HEK293 (cell line): ENCODE measurements at regions of chr20 and their contacts with region 1.

Region 1: GRCh38 chr20:48295445-48295963 is 510.2 kb upstream of the SULF2 start:
- H3K4me3 ChIP-seq: no peak overlapping the region
- H3K27ac ChIP-seq: no peak overlapping the region
- H3K4me1 ChIP-seq: peaks cover 10% of the 10 kb centered on the region
- CTCF ChIP-seq: 0 out of 2 replicates have a peak, but pooled peaks have one; percentile 12

Region 2: DNA sequence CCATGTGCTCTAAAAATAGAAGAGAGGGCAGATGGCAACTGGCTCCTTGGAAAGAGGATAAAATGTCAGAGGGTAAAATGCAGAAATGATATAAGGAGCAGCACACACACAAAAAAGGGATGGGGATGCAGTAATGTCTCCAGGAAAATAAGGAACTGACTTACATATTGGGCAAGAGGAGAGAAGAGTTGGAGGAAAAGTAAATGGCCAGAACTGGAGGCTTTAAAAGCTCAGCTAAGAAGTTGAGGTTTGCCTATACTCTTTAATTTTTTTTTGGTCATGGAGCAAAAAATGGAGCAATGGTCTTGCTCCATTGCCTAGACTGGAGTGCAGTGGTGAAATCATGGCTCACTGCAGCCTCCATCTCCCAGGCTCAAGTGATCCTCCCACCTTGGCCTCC is 603.9 kb before region 1 on chr20:
- CTCF ChIA-PET with region 1: no interaction called
- POLR2A ChIA-PET with region 1: no interaction called
- H3K4me3 ChIP-seq: no peak overlapping the region
- H3K27ac ChIP-seq: no peak overlapping the region
- H3K4me1 ChIP-seq: no peaks in the 10 kb centered on the region
- CTCF ChIP-seq: no peak

Region 3: DNA sequence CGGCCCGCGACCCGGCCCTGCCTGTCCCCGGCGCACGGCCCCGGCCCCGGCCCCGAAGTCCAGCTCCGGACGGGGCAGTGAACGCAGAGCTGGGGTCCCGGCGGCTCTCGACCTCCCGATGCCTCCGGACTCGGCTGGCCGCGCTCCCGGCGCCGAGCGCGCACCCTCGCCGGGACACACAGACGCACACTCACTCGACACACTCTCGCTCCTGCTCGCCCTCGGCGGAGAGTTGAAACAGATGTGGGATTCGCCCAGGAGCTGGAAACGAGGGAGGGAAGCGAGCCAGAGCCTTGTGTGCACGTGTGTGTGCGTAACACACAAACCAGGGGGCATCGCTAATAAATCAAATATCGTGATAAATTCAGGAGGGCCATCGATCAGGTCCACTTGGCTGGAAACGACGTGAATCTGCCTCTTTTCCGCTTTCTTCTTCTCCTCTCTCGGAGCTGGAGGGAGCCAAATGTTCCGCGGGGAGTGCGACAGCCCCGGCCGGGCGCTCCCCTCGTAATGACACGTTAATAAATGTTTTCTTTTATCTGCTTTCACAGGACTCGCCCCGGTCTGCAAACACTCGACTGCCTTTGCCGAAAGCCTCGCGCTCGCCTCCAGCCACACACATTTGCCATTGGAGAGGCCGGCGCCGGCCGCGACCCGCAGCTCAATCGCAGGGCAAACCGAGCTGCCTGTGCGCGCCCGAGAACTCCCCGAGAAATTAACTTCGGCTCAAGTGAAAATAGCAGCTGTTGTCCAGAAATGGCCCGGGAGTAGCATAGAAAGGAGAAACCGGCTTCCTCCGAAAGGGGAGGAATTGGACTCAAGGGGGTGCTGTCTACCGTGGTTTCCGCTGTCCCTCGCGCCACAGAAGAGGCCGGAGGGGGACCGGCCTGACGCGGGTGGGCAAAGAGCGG is 509.4 kb before region 1 on chr20:
- CTCF ChIA-PET with region 1: interaction called, 23 read pairs
- POLR2A ChIA-PET with region 1: no interaction called
- H3K4me3 ChIP-seq: peak overlapping the region; percentile 29
- H3K27ac ChIP-seq: peak overlapping the region; percentile 80
- H3K4me1 ChIP-seq: peaks cover 18% of the 10 kb centered on the region
- CTCF ChIP-seq: peak; percentile 87

Region 4: GRCh38 chr20:47854163-47854562 is 441.3 kb before region 1 on chr20:
- CTCF ChIA-PET with region 1: interaction called, 10 read pairs
- POLR2A ChIA-PET with region 1: no interaction called
- H3K4me3 ChIP-seq: no peak overlapping the region
- H3K27ac ChIP-seq: no peak overlapping the region
- H3K4me1 ChIP-seq: no peaks in the 10 kb centered on the region; the same call in 1 of the 2 replicates
- CTCF ChIP-seq: no peak

Region 5: GRCh38 chr20:48308232-48308781 is 12.8 kb after region 1 on chr20:
- CTCF ChIA-PET with region 1: no interaction called
- POLR2A ChIA-PET with region 1: no interaction called
- H3K4me3 ChIP-seq: no peak overlapping the region
- H3K27ac ChIP-seq: no peak overlapping the region
- H3K4me1 ChIP-seq: no peaks in the 10 kb centered on the region
- CTCF ChIP-seq: no peak